ENCODE measurements at regions of chr3 and their contacts with region 1.

Region 1: GRCh38 chr3:126389112-126389793 is 5.5 kb upstream of the CFAP100 start:
- DNase-seq: peak; percentile 69
- H3K4me3 ChIP-seq: peak overlapping the region; percentile 46 to 53 (median 46)
- H3K27ac ChIP-seq: no peak overlapping the region
- H3K4me1 ChIP-seq: peaks cover 3% of the 10 kb centered on the region
- H3K27me3 ChIP-seq: peaks cover 3% of the 10 kb centered on the region
- CTCF ChIP-seq: peak; percentile 77 to 97

Region 2: GRCh38 chr3:125916376-125916978 is 472.8 kb before region 1 on chr3:
- CTCF ChIA-PET with region 1: no interaction called
- dilution Hi-C with region 1: no loop called
- in situ Hi-C with region 1: no loop called
- intact Hi-C with region 1: loop called (anchors 2 kb)
- DNase-seq: peak; percentile 95
- H3K4me3 ChIP-seq: peak overlapping the region; percentile 86 to 89 (median 87)
- H3K27ac ChIP-seq: peak overlapping the region; percentile 96
- H3K4me1 ChIP-seq: no peaks in the 10 kb centered on the region
- H3K27me3 ChIP-seq: no peaks in the 10 kb centered on the region
- CTCF ChIP-seq: peak in 1 of 2 donors; percentile 45

Region 3: DNA sequence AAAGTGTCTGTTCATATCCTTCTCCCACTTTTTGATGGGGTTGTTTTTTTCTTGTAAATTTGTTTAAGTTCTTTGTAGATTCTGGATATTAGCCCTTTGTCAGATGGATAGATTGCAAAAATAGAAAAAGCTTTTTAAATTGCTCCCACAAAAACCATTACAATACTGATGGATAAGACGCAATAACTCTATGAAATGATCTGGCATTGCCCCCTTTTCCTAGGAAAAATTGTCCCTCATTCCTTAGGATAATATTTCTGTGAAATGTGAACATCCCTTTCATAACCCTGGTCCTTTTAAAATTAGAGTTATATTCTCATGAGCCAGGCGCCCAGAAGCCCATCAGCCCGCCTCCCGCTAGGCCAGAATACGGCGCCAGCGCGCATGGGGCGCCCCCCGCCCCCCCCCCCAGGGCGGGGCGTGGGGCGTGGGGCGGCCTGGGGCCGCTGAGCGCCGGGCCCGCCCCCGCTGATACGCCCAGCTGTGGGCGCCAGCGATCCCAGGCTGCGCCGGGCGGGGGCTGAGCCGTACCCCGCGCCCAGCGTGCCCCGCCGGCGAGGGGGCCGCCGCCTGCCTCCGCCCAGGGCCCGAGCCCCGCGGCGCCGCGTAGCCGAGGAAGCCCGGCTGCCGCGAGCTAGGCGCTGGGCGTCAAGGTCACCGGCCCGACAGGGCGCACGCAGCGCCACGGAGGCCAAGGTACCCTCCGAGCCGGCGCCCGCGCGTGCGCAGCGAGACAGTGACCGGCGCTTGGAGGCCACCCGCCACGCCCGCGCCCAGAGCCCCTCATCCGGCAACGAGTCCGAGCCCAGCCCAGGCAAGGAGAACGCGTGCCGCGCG is 431.4 kb before region 1 on chr3:
- CTCF ChIA-PET with region 1: no interaction called
- dilution Hi-C with region 1: no loop called
- in situ Hi-C with region 1: loop called in 1 of 2 experiments (anchors 25 kb)
- intact Hi-C with region 1: no loop called
- DNase-seq: no peak
- H3K4me3 ChIP-seq: no peak overlapping the region
- H3K27ac ChIP-seq: no peak overlapping the region
- H3K4me1 ChIP-seq: no peaks in the 10 kb centered on the region
- H3K27me3 ChIP-seq: peaks cover 3% of the 10 kb centered on the region
- CTCF ChIP-seq: no peak

Region 4: DNA sequence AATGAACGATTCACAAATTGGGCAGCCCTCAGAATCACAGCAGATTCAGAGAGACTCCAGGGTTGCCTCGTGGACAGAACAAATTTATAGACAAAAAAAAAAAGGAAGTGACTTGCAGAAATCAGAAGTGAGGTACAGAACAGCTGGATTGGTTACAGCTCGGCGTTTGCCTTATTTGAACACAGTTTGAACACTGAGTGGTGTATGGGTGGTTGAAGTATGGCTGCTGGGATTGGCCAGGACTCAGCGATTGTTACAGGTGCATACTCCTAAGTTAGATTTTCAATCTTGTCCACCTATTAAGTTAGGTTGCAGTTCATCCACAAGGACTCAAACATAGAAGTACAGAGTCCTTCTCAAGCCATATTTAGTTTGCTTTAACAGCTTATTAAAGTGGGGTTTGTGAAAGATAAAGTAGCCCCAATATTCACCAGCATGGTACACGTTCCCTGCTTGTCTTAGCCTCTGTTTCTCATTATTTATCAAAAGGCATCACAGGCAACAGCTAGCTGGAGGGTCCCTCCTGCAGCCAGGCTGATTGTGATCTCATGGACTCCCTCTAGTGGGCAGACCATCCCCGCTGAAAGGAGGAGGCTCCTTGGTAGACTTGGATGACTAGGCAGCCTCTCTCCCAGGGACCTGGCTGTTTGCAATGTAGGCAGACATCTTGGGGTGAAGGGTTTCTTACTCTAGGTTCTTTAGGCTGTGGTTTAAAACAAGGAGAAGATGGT is 191.2 kb before region 1 on chr3:
- CTCF ChIA-PET with region 1: interaction called, 13 read pairs
- dilution Hi-C with region 1: no loop called
- in situ Hi-C with region 1: no loop called
- intact Hi-C with region 1: loop called (anchors 1 kb)
- DNase-seq: peak; percentile 46
- H3K4me3 ChIP-seq: no peak overlapping the region
- H3K27ac ChIP-seq: no peak overlapping the region
- H3K4me1 ChIP-seq: no peaks in the 10 kb centered on the region
- H3K27me3 ChIP-seq: no peaks in the 10 kb centered on the region
- CTCF ChIP-seq: peak; percentile 87 to 92

Region 5: GRCh38 chr3:126245811-126246727 is 143.2 kb before region 1 on chr3:
- CTCF ChIA-PET with region 1: no interaction called
- dilution Hi-C with region 1: no loop called
- in situ Hi-C with region 1: loop called (anchors 5 to 10 kb)
- intact Hi-C with region 1: loop called (anchors 1 kb)
- DNase-seq: no peak
- H3K4me3 ChIP-seq: no peak overlapping the region
- H3K27ac ChIP-seq: no peak overlapping the region
- H3K4me1 ChIP-seq: no peaks in the 10 kb centered on the region
- H3K27me3 ChIP-seq: no peaks in the 10 kb centered on the region
- CTCF ChIP-seq: peak; percentile 56 to 73

Region 6: GRCh38 chr3:126259411-126260391 is 129.6 kb before region 1 on chr3:
- CTCF ChIA-PET with region 1: interaction called, 16 read pairs
- dilution Hi-C with region 1: no loop called
- in situ Hi-C with region 1: loop called in 1 of 2 experiments (anchors 10 kb)
- intact Hi-C with region 1: loop called (anchors 1 kb)
- DNase-seq: no peak
- H3K4me3 ChIP-seq: no peak overlapping the region
- H3K27ac ChIP-seq: no peak overlapping the region
- H3K4me1 ChIP-seq: peaks cover 6% of the 10 kb centered on the region
- H3K27me3 ChIP-seq: no peaks in the 10 kb centered on the region
- CTCF ChIP-seq: peak; percentile 33 to 57

Region 7: DNA sequence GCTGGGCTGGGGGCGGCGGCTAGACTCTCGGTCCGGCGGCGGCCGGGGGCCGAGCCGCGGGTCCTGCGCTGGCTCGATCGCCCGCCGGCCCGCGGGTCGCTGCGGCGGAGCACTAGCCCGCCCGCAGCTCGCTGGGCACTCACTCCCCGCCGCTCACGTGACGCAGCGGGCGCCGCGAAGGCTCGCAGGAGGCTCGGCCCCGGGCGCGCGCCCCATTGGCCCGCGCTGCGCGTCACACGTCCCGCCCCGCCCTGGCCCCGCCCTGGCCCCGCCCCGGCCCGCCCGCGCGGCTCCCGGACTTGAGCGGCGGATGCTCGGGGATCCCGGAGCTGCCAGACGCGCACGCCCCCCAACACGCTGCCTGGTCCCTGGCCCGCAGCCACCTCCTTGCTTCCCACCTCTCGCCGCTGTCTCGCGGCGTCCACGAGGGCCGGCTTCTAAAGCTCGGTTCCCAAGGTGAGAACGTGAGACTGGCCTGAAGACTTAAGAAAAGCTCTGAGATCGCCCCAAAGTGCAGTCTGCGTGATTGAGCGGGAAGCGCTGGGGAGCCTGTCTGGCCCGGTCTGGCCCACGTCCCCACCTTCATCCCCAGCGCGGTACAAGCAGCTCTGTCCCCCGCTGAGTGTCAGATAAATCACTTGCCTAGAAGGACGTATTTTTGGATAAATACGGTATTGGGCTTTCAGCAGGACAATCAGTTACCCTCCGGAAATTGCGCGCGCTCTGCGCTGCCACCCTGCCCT is 31.8 kb before region 1 on chr3 and contains the start of gene KLF15:
- CTCF ChIA-PET with region 1: no interaction called
- dilution Hi-C with region 1: no loop called
- in situ Hi-C with region 1: no loop called
- intact Hi-C with region 1: no loop called
- DNase-seq: peak; percentile 71
- H3K4me3 ChIP-seq: peak within 1 kb of the TSS; percentile 59 to 68 (median 64)
- H3K27ac ChIP-seq: no peak within 1 kb of the TSS
- H3K4me1 ChIP-seq: peaks cover 18% of the 10 kb centered on the region
- H3K27me3 ChIP-seq: peaks cover 10% of the 10 kb centered on the region
- CTCF ChIP-seq: no peak
- total RNA-seq, gene KLF15: 0.17 to 0.61 TPM

Region 8: GRCh38 chr3:126731044-126731443 is 341.8 kb after region 1 on chr3:
- CTCF ChIA-PET with region 1: no interaction called
- dilution Hi-C with region 1: no loop called
- in situ Hi-C with region 1: no loop called
- intact Hi-C with region 1: no loop called
- DNase-seq: no peak
- H3K4me3 ChIP-seq: no peak overlapping the region
- H3K27ac ChIP-seq: no peak overlapping the region
- H3K4me1 ChIP-seq: no peaks in the 10 kb centered on the region
- H3K27me3 ChIP-seq: no peaks in the 10 kb centered on the region
- CTCF ChIP-seq: no peak

Measured in mammary epithelial cell (primary cell).